Posterior vena cava (tissue), 2 donors: ENCODE measurements at regions of chr17 and their contacts with region 1.

Region 1: GRCh38 chr17:67248291-67248690 is 3.3 kb upstream of the HELZ start:
- DNase-seq: no peak

Region 2: DNA sequence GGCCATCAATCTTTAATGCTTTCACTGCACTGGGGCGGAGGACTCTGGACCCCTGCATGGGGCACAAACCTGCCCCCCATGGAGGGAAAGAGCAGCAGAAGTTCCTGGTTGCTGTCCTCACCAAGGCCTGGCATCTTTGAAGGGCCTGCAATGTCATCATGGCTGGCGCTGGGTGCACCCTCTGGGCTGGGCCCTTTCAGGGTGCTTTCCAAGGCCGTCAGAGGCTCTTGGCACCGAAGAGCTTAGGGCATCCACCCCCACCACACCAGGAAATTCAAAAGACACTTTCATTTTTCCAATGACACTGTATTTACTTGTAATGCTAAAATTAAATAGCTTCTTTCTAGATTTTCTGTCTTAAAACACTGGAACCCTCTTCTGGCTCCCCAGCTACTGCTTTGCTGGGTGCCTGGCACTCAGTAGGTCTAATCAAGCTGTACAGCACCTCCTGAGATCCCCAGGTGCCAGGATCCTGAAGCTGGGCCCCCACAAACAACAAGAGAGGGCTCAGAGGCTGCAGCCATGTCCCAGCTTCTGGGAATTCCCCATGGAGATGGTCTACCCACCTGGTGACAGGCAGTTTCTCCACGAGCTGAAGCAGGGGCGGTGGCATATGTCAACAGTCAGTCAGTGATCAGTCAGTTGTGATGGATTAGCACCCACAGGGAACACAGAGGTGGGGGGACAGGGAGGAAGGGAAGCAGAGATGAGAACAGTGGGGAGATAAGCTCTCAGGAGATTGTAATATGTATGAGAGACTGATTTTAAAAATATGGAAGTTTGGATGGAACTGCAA is 206.0 kb before region 1 on chr17:
- intact Hi-C with region 1: no loop called
- DNase-seq: no peak

Region 3: GRCh38 chr17:67272312-67273050 is 24.2 kb after region 1 on chr17:
- intact Hi-C with region 1: loop called in 1 of 2 experiments (anchors 1 kb)
- DNase-seq: peak; percentile 41

Region 4: DNA sequence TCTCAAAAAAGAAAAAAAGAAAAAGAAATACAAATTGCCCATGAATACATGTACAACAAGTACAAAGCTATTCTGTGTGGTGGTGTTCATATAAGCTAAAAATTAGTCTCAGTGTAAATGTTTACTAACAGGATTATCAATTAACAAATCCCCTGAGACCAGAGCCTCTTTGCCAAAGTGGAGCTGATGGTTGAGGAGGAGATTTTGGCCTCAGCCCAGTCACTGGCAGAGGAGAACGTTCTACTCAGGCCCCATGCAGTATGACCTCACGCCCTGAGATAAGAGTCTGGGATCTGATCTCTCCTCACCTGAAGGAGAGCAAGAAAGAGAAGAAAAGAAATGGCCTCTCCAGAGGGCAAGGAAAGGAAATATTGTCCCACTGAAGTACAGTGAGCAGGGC is 433.9 kb after region 1 on chr17:
- intact Hi-C with region 1: no loop called
- DNase-seq: no peak